Activated CD4-positive, alpha-beta T cell treated with anti-CD3 and anti-CD28 coated beads, Interleukin-2, amount 10 ng/mL, durations not matched to agents 7 days and 5 days (primary cell): ENCODE measurements at regions of chr2 and their contacts with region 1.

Region 1: DNA sequence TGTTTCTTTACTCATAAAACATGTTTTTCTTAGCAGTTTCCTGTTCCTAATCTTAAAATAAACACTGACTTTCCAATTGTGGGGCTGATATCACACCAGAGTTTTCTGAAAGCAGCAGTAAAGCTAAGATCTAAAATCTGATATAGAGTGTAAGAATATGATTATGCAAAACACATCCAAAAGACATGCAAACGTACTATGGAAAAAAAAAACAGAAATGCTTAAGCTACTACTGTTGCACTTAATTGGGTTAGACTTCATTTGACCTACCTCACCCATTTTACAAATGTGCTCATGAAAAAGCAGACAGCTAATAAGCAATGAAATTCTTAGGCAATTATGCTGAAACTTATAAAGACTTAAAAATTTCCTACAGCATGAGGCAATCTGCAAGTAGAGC is 10.5 kb downstream of the CYTIP start:
- DNase-seq: no peak
- H3K4me3 Mint-ChIP-seq: peak overlapping the region; percentile 96
- H3K27ac Mint-ChIP-seq: peak overlapping the region; percentile 96
- H3K4me1 Mint-ChIP-seq: peaks cover 76% of the 10 kb centered on the region
- H3K27me3 Mint-ChIP-seq: no peaks in the 10 kb centered on the region

Region 2: DNA sequence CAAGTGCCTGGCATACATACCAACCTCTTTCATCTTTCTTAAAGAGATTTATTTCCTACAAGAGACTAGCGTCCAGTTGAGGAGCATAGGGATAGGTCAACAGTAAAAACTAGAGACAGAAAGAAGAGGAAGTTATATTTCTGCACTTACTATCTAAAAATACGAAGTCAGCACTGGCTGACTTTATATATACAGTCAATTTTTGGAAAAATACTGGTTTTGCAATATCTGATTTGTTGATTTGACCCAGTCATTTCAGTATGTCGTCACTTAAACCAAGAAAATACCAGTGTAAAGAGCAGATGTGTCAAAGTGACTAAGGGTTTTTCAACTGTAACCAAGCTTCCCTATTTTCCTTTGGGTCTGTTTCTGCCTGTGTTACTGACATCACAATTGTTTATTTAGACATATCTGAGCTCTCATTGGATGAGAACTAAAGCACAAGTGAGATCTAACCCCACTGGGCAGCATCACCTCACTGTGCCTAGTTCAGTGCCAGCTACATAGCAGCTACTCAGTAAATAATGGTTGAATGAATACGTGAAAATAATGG is 12.5 kb before region 1 on chr2:
- CTCF ChIA-PET with region 1: interaction called, 19 read pairs
- POLR2A ChIA-PET with region 1: interaction called, 10 read pairs
- DNase-seq: no peak
- H3K4me3 Mint-ChIP-seq: no peak overlapping the region
- H3K27ac Mint-ChIP-seq: peak overlapping the region; percentile 93
- H3K4me1 Mint-ChIP-seq: peaks cover 79% of the 10 kb centered on the region
- H3K27me3 Mint-ChIP-seq: no peaks in the 10 kb centered on the region

Region 3: DNA sequence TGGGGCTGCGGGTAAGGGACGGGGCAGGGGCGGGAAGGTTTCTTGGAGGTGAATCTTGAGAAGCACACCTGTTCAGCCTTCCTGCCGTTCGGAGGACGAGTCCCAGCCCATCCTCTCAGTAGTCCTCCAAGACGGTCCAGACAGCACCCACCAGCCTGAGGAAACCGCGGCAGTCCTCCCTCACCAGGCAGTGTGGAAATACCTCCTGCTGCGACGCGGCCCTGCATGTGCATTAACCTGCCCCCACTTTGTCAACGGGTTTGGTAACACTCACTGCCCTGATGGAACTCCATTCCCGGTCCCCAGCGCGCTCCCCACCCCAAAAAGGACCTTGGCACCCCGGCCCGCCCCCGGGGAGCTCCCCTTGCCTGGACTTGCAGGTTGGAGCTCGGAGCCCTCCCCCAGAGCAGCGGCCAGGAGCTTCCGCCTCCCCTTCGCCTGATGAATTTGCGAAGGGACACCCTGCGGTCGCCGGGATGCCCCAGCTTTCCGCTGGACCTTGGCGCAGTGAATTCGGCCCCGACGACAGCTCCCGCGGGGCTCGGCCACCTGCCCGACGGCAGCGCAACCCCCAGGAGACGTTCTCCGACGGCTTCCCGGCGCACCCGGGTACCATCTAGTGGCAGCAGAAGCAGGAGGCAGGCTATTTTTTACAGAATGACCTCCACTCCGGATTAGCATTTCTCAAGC is 163.7 kb after region 1 on chr2:
- CTCF ChIA-PET with region 1: no interaction called
- POLR2A ChIA-PET with region 1: interaction called, 10 read pairs
- DNase-seq: peak; percentile 62
- H3K4me3 Mint-ChIP-seq: peak overlapping the region; percentile 45
- H3K27ac Mint-ChIP-seq: no peak overlapping the region
- H3K4me1 Mint-ChIP-seq: peaks cover 9% of the 10 kb centered on the region
- H3K27me3 Mint-ChIP-seq: peaks cover 6% of the 10 kb centered on the region

Region 4: DNA sequence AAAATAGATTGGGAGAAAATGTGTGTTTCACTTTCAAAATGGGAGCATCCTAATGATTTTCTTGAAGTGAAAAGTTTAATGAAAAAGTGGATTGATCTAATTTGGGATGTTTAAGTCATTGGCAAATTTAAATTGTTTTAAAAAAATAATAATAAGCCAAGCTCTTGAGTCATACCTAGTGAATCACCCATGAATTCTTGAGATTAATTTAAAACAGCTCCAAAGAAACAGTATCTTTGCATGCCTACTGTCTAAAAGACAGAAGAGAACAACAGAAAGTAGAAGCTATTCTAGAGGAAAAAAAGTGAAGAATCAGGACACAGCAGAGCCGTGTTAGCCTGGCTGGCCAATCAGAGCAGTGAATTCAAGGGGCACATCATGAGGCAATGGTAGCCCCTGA is 187.6 kb after region 1 on chr2:
- CTCF ChIA-PET with region 1: no interaction called
- POLR2A ChIA-PET with region 1: no interaction called
- DNase-seq: no peak
- H3K4me3 Mint-ChIP-seq: no peak overlapping the region
- H3K27ac Mint-ChIP-seq: no peak overlapping the region
- H3K4me1 Mint-ChIP-seq: peaks cover 17% of the 10 kb centered on the region
- H3K27me3 Mint-ChIP-seq: peaks cover 11% of the 10 kb centered on the region